CD4-positive, alpha-beta memory T cell (primary cell): ENCODE measurements at regions of chr1 and their contacts with region 1.

Region 1: GRCh38 chr1:54488779-54489626 is 59.0 kb upstream of the ACOT11 start:
- DNase-seq: peak; percentile 65 to 84 (median 72)
- H3K4me3 ChIP-seq: peak overlapping the region; percentile 71 to 94
- H3K4me3 Mint-ChIP-seq: peak overlapping the region; percentile 88 to 96 (median 90)
- H3K27ac ChIP-seq: peak overlapping the region; percentile 72
- H3K27ac Mint-ChIP-seq: peak overlapping the region; percentile 82 to 95 (median 88)
- H3K4me1 ChIP-seq: peaks cover 39% of the 10 kb centered on the region
- H3K4me1 Mint-ChIP-seq: peaks cover 32 to 51% (median 43%) of the 10 kb centered on the region in 4 donors
- H3K27me3 ChIP-seq: no peaks in the 10 kb centered on the region
- H3K27me3 Mint-ChIP-seq: peaks cover 0 to 4% of the 10 kb centered on the region in 2 donors

Region 2: GRCh38 chr1:53811414-53811851 is 677.6 kb before region 1 on chr1:
- CTCF ChIA-PET with region 1: no interaction called
- POLR2A ChIA-PET with region 1: no interaction called
- intact Hi-C with region 1: no loop called
- DNase-seq: no peak
- H3K4me3 ChIP-seq: no peak overlapping the region
- H3K4me3 Mint-ChIP-seq: no peak overlapping the region
- H3K27ac ChIP-seq: no peak overlapping the region
- H3K27ac Mint-ChIP-seq: peak overlapping the region in 2 of 7 donors; percentile 12 to 60
- H3K4me1 ChIP-seq: no peaks in the 10 kb centered on the region
- H3K4me1 Mint-ChIP-seq: peaks cover 0 to 5% (median 5%) of the 10 kb centered on the region in 4 donors
- H3K27me3 ChIP-seq: no peaks in the 10 kb centered on the region
- H3K27me3 Mint-ChIP-seq: no peaks in the 10 kb centered on the region

Region 3: DNA sequence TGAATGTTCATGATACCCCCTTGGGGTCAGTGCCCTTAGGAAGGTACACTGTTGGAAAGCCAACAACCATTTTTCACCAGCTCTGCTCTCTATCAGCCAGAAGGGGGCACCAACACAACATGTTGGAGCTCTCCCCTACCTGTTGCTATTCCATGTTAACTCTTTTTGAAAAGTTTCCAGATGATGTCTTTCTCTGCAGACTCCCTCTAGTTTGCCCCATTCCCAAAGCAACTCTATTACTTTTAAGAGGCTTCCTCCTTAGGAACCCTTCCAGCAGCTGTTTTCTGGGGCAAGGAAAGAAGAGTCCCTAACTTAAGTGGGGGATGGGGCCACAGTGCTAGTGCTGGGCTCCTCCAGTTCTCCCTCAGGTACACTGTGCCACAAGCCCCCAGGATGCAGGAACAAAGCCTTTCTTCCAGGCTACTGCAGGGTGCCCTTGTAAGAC is 628.0 kb before region 1 on chr1:
- CTCF ChIA-PET with region 1: interaction called, 13 read pairs
- POLR2A ChIA-PET with region 1: no interaction called
- intact Hi-C with region 1: no loop called
- DNase-seq: peak; percentile 49 to 59 (median 56)
- H3K4me3 ChIP-seq: no peak overlapping the region
- H3K4me3 Mint-ChIP-seq: no peak overlapping the region
- H3K27ac ChIP-seq: no peak overlapping the region
- H3K27ac Mint-ChIP-seq: peak overlapping the region in 1 of 7 donors; percentile 25
- H3K4me1 ChIP-seq: no peaks in the 10 kb centered on the region
- H3K4me1 Mint-ChIP-seq: peaks cover 0 to 16% (median 4%) of the 10 kb centered on the region in 4 donors
- H3K27me3 ChIP-seq: no peaks in the 10 kb centered on the region
- H3K27me3 Mint-ChIP-seq: no peaks in the 10 kb centered on the region

Region 4: GRCh38 chr1:54070171-54070837 is 418.7 kb before region 1 on chr1:
- CTCF ChIA-PET with region 1: interaction called, 27 read pairs
- POLR2A ChIA-PET with region 1: interaction called, 4 read pairs
- intact Hi-C with region 1: loop called (anchors 1 kb)
- DNase-seq: peak in 4 of 5 donors; percentile 55 to 61 (median 56)
- H3K4me3 ChIP-seq: no peak overlapping the region
- H3K4me3 Mint-ChIP-seq: peak overlapping the region in 1 of 8 donors; percentile 0
- H3K27ac ChIP-seq: no peak overlapping the region
- H3K27ac Mint-ChIP-seq: peak overlapping the region in 1 of 7 donors; percentile 2
- H3K4me1 ChIP-seq: no peaks in the 10 kb centered on the region
- H3K4me1 Mint-ChIP-seq: peaks cover 0 to 2% (median 0%) of the 10 kb centered on the region in 4 donors
- H3K27me3 ChIP-seq: no peaks in the 10 kb centered on the region
- H3K27me3 Mint-ChIP-seq: no peaks in the 10 kb centered on the region

Region 5: GRCh38 chr1:54188291-54188690 is 300.7 kb before region 1 on chr1:
- CTCF ChIA-PET with region 1: interaction called, 41 read pairs
- POLR2A ChIA-PET with region 1: no interaction called
- intact Hi-C with region 1: no loop called
- DNase-seq: no peak
- H3K4me3 ChIP-seq: no peak overlapping the region
- H3K4me3 Mint-ChIP-seq: no peak overlapping the region
- H3K27ac ChIP-seq: no peak overlapping the region
- H3K27ac Mint-ChIP-seq: no peak overlapping the region
- H3K4me1 ChIP-seq: no peaks in the 10 kb centered on the region
- H3K4me1 Mint-ChIP-seq: no peaks in the 10 kb centered on the region
- H3K27me3 ChIP-seq: no peaks in the 10 kb centered on the region
- H3K27me3 Mint-ChIP-seq: no peaks in the 10 kb centered on the region

Region 6: GRCh38 chr1:54355931-54356679 is 132.9 kb before region 1 on chr1:
- CTCF ChIA-PET with region 1: interaction called, 11 read pairs
- POLR2A ChIA-PET with region 1: interaction called, 4 read pairs
- intact Hi-C with region 1: loop called (anchors 1 kb)
- DNase-seq: no peak
- H3K4me3 ChIP-seq: peak overlapping the region in 1 of 2 donors; percentile 32
- H3K4me3 Mint-ChIP-seq: peak overlapping the region; percentile 80 to 91 (median 88)
- H3K27ac ChIP-seq: peak overlapping the region; percentile 47
- H3K27ac Mint-ChIP-seq: peak overlapping the region; percentile 61 to 94 (median 89)
- H3K4me1 ChIP-seq: peaks cover 58% of the 10 kb centered on the region
- H3K4me1 Mint-ChIP-seq: peaks cover 40 to 92% (median 71%) of the 10 kb centered on the region in 4 donors
- H3K27me3 ChIP-seq: no peaks in the 10 kb centered on the region
- H3K27me3 Mint-ChIP-seq: no peaks in the 10 kb centered on the region

Region 7: DNA sequence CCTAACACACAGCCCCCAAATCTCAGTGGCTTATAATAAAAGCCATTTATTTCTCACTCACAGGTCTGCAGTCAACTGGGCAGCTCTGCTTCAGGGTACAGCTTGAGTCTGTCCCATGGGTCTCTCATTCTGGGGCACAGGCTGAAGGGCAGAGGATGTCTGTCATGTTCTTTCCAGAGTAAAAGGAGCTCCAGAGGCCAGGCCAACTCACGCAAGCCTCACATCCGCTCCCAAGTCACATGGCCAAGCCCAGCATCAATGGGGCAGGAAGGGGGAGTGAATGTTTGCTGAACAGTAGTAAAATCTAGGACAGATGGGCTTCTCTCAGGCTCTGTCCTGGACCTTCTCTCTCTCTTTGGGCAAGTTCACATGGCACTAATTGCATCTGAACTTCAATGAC is 75.7 kb before region 1 on chr1:
- CTCF ChIA-PET with region 1: interaction called, 7 read pairs
- POLR2A ChIA-PET with region 1: interaction called, 19 read pairs
- intact Hi-C with region 1: no loop called
- DNase-seq: peak in 1 of 5 donors; percentile 19
- H3K4me3 ChIP-seq: no peak overlapping the region
- H3K4me3 Mint-ChIP-seq: peak overlapping the region in 7 of 8 donors; percentile 9 to 67 (median 41)
- H3K27ac ChIP-seq: no peak overlapping the region
- H3K27ac Mint-ChIP-seq: peak overlapping the region in 4 of 7 donors; percentile 12 to 81 (median 76)
- H3K4me1 ChIP-seq: peaks cover 39% of the 10 kb centered on the region
- H3K4me1 Mint-ChIP-seq: peaks cover 24 to 49% (median 38%) of the 10 kb centered on the region in 4 donors
- H3K27me3 ChIP-seq: no peaks in the 10 kb centered on the region
- H3K27me3 Mint-ChIP-seq: peaks cover 0 to 4% of the 10 kb centered on the region in 2 donors

Region 8: DNA sequence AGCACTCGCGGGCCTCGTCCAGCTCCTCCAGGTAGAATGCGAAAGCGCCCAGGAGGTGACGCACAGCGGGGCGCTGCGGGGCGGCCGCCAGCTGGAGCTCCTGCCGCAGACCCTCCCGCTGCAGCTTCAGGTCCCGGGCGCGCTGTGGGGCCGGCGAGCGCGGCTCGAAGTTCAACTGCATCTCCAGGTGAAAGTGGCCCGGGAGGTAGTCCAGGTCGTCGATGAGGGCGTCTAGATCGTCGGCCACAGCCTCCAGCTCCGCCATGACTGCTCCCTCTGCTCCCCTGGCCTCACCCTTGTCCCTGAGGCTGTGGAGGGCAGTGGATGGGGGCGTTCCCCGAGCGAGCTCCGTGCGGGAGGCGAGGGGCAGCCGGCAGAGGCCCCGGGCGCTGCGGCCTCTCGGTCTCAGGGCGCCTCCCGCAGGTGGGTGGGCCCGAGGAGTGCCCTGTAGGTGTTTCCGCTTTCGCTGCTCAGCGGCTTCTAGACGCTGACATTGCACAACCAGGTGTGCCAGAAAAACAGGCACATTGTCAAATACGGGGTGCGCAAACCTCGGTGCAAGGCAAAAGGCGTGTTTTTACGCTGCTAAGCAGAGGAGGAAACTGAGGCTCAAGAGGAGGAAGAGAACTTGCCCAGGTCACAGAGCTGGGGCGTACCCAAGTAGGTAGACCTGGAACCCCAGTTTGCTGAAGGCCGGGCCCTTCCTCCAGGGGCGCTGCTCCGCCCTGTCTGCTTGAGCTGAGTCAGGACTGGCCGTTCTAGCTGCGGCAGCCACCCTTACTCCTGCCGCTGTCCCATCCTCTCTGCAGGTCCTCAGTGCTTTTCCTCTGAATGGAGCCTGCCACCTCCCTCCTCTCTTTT is 312.1 kb after region 1 on chr1 and contains the start of gene TTC22:
- CTCF ChIA-PET with region 1: interaction called, 8 read pairs
- POLR2A ChIA-PET with region 1: interaction called, 10 read pairs
- intact Hi-C with region 1: no loop called
- DNase-seq: peak; percentile 65 to 77 (median 70)
- H3K4me3 ChIP-seq: peak within 1 kb of the TSS; percentile 89 to 90
- H3K4me3 Mint-ChIP-seq: peak within 1 kb of the TSS; percentile 90 to 99 (median 96)
- H3K27ac ChIP-seq: peak within 1 kb of the TSS; percentile 68
- H3K27ac Mint-ChIP-seq: peak within 1 kb of the TSS; percentile 89 to 98 (median 96)
- H3K4me1 ChIP-seq: peaks cover 46% of the 10 kb centered on the region
- H3K4me1 Mint-ChIP-seq: peaks cover 40 to 73% (median 57%) of the 10 kb centered on the region in 4 donors
- H3K27me3 ChIP-seq: no peaks in the 10 kb centered on the region
- H3K27me3 Mint-ChIP-seq: no peaks in the 10 kb centered on the region
- total RNA-seq, gene TTC22: 18.6 to 19.0 TPM

Region 9: DNA sequence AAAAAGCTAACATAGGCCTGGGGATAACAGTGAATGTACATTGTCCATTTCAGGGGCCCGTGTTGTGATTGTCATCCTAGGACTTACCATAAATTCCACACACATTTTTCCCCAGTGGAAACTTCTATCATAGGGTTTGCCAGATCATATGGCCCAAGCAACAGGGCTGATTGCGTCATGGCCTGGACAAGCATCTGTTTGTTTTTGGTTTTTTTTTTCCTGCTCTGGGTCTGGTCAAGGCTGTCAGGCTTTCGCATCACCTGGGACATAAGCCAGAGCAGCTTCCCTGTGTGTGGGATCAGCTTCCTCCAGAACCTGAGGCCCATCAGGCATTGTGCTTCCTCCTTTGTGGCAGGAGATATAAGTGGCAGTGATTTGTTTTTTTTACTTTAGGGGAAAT is 1324.6 kb after region 1 on chr1:
- CTCF ChIA-PET with region 1: no interaction called
- POLR2A ChIA-PET with region 1: no interaction called
- intact Hi-C with region 1: no loop called
- DNase-seq: no peak
- H3K4me3 ChIP-seq: no peak overlapping the region
- H3K4me3 Mint-ChIP-seq: no peak overlapping the region
- H3K27ac ChIP-seq: no peak overlapping the region
- H3K27ac Mint-ChIP-seq: no peak overlapping the region
- H3K4me1 ChIP-seq: no peaks in the 10 kb centered on the region
- H3K4me1 Mint-ChIP-seq: peaks cover 0 to 2% (median 0%) of the 10 kb centered on the region in 4 donors
- H3K27me3 ChIP-seq: no peaks in the 10 kb centered on the region
- H3K27me3 Mint-ChIP-seq: no peaks in the 10 kb centered on the region